PC-9 (cell line): ENCODE measurements at regions of chr1 and their contacts with region 1.

Region 1: GRCh38 chr1:47437447-47438164 is at the start of gene FOXD2:
- DNase-seq: peak; percentile 77 to 94
- H3K4me3 ChIP-seq: peak within 1 kb of the TSS; percentile 68
- H3K27ac ChIP-seq: peak within 1 kb of the TSS; percentile 56
- H3K4me1 ChIP-seq: 0 out of 2 replicates have a peak, but pooled peaks cover 6% of the 10 kb centered on the region
- H3K27me3 ChIP-seq: no peaks in the 10 kb centered on the region
- CTCF ChIP-seq: peak; percentile 86
- total RNA-seq, gene FOXD2: 0.35 and 0.48 TPM in 2 replicates

Region 2: GRCh38 chr1:46442317-46443161 is 995.1 kb before region 1 on chr1:
- CTCF ChIA-PET with region 1: no interaction called
- POLR2A ChIA-PET with region 1: interaction called, 17 read pairs
- intact Hi-C with region 1: no loop called
- DNase-seq: peak; percentile 61 to 91
- H3K4me3 ChIP-seq: peak overlapping the region; percentile 58
- H3K27ac ChIP-seq: no peak overlapping the region
- H3K4me1 ChIP-seq: 0 out of 2 replicates have a peak, but pooled peaks cover 8% of the 10 kb centered on the region
- H3K27me3 ChIP-seq: peaks cover 5% of the 10 kb centered on the region
- CTCF ChIP-seq: peak; percentile 93

Region 3: GRCh38 chr1:47313915-47314664 is 123.5 kb before region 1 on chr1 and contains the start of gene STIL:
- CTCF ChIA-PET with region 1: interaction called, 7 read pairs
- POLR2A ChIA-PET with region 1: interaction called, 3 read pairs
- intact Hi-C with region 1: loop called (anchors 5 kb)
- DNase-seq: peak; percentile 99
- H3K4me3 ChIP-seq: peak within 1 kb of the TSS; percentile 67
- H3K27ac ChIP-seq: peak within 1 kb of the TSS; percentile 87
- H3K4me1 ChIP-seq: peaks cover 12% of the 10 kb centered on the region
- H3K27me3 ChIP-seq: no peaks in the 10 kb centered on the region
- CTCF ChIP-seq: no peak
- total RNA-seq, gene STIL: 35.8 and 37.0 TPM in 2 replicates

Region 4: DNA sequence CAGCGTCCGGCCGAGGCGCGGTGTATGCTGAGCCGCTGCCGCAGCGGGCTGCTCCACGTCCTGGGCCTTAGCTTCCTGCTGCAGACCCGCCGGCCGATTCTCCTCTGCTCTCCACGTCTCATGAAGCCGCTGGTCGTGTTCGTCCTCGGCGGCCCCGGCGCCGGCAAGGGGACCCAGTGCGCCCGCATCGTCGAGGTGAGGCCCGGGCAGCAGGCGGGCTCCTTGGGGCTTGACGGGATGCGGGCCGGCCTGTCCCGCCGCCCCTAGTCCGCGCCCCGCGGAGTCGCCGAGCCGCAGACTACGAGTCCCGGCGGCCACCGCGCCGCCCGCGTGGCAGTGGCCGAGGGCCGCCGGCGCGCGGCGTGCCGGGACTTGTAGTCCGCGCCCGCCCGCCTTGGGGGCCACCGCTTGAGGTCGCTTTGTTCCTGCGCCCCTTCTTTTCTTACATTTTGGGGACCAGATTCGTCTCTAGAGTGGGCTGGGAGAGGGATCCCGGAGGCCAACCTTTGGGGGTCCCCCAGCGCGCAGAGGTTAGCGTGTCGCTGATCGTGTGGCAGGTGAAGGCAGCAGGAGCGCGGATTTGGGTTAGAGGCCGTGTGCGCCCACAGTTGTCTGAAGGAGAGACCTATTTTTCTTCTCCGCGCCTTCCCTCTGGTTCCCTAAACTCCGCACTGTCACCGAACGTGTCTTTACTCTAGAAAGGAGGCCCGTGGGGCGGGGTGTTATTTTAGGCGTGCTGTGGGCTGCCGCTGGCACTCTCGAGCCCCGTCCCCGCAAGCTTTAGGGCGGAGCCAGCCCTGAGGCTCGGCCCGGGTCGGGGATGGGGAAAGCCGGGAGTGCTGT is 103.5 kb before region 1 on chr1:
- CTCF ChIA-PET with region 1: interaction called, 10 read pairs
- POLR2A ChIA-PET with region 1: interaction called, 8 read pairs
- intact Hi-C with region 1: no loop called
- DNase-seq: peak; percentile 62 to 77
- H3K4me3 ChIP-seq: peak overlapping the region; percentile 96
- H3K27ac ChIP-seq: peak overlapping the region; percentile 93
- H3K4me1 ChIP-seq: peaks cover 30% of the 10 kb centered on the region
- H3K27me3 ChIP-seq: no peaks in the 10 kb centered on the region
- CTCF ChIP-seq: no peak; the same call in 1 of the 2 replicates

Region 5: DNA sequence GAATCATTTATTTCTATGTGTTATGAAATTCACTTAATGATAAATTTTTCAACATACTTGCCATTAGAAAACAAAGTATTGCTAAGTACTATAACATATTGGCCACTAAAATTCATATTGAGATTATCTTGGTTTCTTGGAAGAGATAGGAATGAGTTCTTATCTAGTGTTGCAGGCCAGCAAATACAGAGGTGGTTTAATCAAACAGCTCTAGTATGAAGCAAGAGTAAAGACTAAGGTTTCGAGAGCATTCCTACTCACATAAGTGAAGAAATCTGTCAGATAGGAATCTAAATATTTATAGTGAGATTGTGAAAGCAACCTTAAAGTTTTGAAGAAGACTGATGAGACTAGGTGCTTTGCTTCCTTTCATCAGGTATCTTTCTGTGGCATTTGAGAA is 59.5 kb before region 1 on chr1:
- CTCF ChIA-PET with region 1: no interaction called
- POLR2A ChIA-PET with region 1: no interaction called
- intact Hi-C with region 1: no loop called
- DNase-seq: no peak
- H3K4me3 ChIP-seq: no peak overlapping the region
- H3K27ac ChIP-seq: no peak overlapping the region
- H3K4me1 ChIP-seq: no peaks in the 10 kb centered on the region
- H3K27me3 ChIP-seq: no peaks in the 10 kb centered on the region
- CTCF ChIP-seq: no peak

Region 6: GRCh38 chr1:47449822-47450552 is 12.4 kb after region 1 on chr1:
- CTCF ChIA-PET with region 1: interaction called, 13 read pairs
- POLR2A ChIA-PET with region 1: no interaction called
- intact Hi-C with region 1: no loop called
- DNase-seq: no peak
- H3K4me3 ChIP-seq: no peak overlapping the region
- H3K27ac ChIP-seq: no peak overlapping the region
- H3K4me1 ChIP-seq: no peaks in the 10 kb centered on the region
- H3K27me3 ChIP-seq: no peaks in the 10 kb centered on the region
- CTCF ChIP-seq: peak; percentile 58

Region 7: GRCh38 chr1:47495176-47495713 is 57.6 kb after region 1 on chr1:
- CTCF ChIA-PET with region 1: no interaction called
- POLR2A ChIA-PET with region 1: no interaction called
- intact Hi-C with region 1: no loop called
- DNase-seq: no peak
- H3K4me3 ChIP-seq: no peak overlapping the region
- H3K27ac ChIP-seq: no peak overlapping the region
- H3K4me1 ChIP-seq: no peaks in the 10 kb centered on the region
- H3K27me3 ChIP-seq: no peaks in the 10 kb centered on the region
- CTCF ChIP-seq: no peak

Region 8: GRCh38 chr1:47527658-47528255 is 90.2 kb after region 1 on chr1:
- CTCF ChIA-PET with region 1: no interaction called
- POLR2A ChIA-PET with region 1: no interaction called
- intact Hi-C with region 1: no loop called
- DNase-seq: peak in 1 of 2 experiments; percentile 16
- H3K4me3 ChIP-seq: no peak overlapping the region
- H3K27ac ChIP-seq: no peak overlapping the region
- H3K4me1 ChIP-seq: no peaks in the 10 kb centered on the region
- H3K27me3 ChIP-seq: no peaks in the 10 kb centered on the region
- CTCF ChIP-seq: peak; percentile 74

Region 9: DNA sequence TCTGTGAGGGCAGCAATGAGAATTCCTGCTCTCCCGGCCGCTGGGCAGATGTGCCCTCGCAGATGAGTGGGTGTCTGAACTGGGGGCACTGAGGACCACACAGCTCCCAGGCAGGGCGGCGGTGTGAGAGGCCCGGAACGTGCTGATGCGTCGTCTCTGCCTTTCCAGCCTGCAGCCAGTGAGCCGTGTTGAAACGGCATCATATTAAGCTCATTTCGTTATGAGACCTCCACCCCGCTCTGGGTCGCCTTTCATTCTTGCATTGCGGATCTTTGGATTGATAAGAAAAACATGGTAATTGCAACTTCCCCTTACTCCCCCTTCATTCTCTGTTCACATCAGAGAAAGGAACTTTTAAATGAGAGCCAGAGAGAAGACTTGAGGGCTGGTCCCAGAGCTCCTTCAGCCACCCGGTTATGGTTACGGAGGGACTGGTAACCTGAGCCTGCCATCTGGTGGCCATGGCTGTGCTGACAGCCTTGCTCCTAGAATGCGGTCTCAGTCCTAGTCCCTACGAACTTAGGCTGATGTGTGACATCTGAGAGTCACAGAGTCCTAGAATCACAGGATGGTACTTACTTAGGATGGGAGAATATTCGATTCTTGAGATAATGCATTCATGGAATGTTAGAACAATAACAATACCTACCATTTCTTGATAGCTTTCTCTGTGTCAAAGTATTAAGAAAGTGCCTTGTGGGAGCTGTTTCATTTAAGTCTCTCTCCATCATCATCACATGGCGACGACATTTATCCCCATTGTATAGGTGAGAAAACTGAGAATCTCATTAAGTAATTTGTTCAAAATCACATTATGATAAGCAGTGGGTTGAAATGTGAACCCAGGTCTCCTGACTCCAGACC is 288.6 kb after region 1 on chr1:
- CTCF ChIA-PET with region 1: interaction called, 36 read pairs
- POLR2A ChIA-PET with region 1: interaction called, 4 read pairs
- intact Hi-C with region 1: loop called (anchors 1 kb)
- DNase-seq: peak; percentile 58 to 64
- H3K4me3 ChIP-seq: no peak overlapping the region
- H3K27ac ChIP-seq: no peak overlapping the region
- H3K4me1 ChIP-seq: no peaks in the 10 kb centered on the region; the same call in 1 of the 2 replicates
- H3K27me3 ChIP-seq: no peaks in the 10 kb centered on the region; the same call in 1 of the 2 replicates
- CTCF ChIP-seq: peak; percentile 88